Heart right ventricle (tissue), 16 donors: ENCODE measurements at regions of chr4 and their contacts with region 1.

Region 1: GRCh38 chr4:17232566-17233253 is 279.2 kb downstream of the QDPR start:
- DNase-seq: peak; percentile 21 to 85
- ATAC-seq: peak; percentile 93 to 98 (median 96)
- H3K4me3 ChIP-seq: no peak overlapping the region
- H3K27ac ChIP-seq: peak overlapping the region; percentile 32 to 86 (median 70)
- H3K4me1 ChIP-seq: peaks cover 0 to 26% (median 14%) of the 10 kb centered on the region in 9 donors
- H3K27me3 ChIP-seq: no peaks in the 10 kb centered on the region
- CTCF ChIP-seq: no peak

Region 2: GRCh38 chr4:16721613-16722291 is 511.0 kb before region 1 on chr4:
- intact Hi-C with region 1: no loop called
- DNase-seq: no peak
- ATAC-seq: peak in 6 of 8 donors; percentile 31 to 63 (median 51)
- H3K4me3 ChIP-seq: peak overlapping the region in 5 of 10 donors; percentile 2 to 13 (median 9)
- H3K27ac ChIP-seq: peak overlapping the region in 5 of 10 donors; percentile 1 to 36 (median 16)
- H3K4me1 ChIP-seq: peaks cover 0 to 19% (median 8%) of the 10 kb centered on the region in 9 donors
- H3K27me3 ChIP-seq: no peaks in the 10 kb centered on the region
- CTCF ChIP-seq: no peak

Region 3: GRCh38 chr4:17168571-17168970 is 64.1 kb before region 1 on chr4:
- intact Hi-C with region 1: loop called in 2 of 10 experiments (anchors 5 kb)
- DNase-seq: peak in 1 of 2 donors; percentile 65
- ATAC-seq: peak in 7 of 8 donors; percentile 56 to 87 (median 74)
- H3K4me3 ChIP-seq: no peak overlapping the region
- H3K27ac ChIP-seq: peak overlapping the region in 5 of 10 donors; percentile 16 to 70 (median 53)
- H3K4me1 ChIP-seq: peaks cover 4 to 42% (median 20%) of the 10 kb centered on the region in 9 donors
- H3K27me3 ChIP-seq: no peaks in the 10 kb centered on the region
- CTCF ChIP-seq: no peak

Region 4: DNA sequence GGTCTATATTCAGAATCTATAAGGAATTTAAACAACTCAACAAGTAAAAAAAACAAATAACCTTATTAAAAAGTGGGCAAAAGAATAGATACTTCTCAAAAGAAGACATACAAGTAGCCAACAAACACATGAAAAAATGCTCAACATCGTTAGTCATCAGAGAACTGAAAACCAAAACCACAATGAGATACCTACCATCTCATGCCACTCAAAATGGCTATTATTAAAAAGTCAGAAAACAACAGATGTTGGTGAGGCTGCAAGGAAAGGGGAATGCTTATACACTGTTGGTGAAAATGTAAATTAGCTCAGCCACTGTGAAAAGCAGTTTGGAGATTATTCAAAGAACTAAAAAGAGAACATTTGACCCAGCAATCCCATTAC is 77.6 kb after region 1 on chr4:
- intact Hi-C with region 1: loop called in 1 of 10 experiments (anchors 10 kb)
- DNase-seq: no peak
- ATAC-seq: no peak
- H3K4me3 ChIP-seq: no peak overlapping the region
- H3K27ac ChIP-seq: no peak overlapping the region
- H3K4me1 ChIP-seq: no peaks in the 10 kb centered on the region
- H3K27me3 ChIP-seq: no peaks in the 10 kb centered on the region
- CTCF ChIP-seq: no peak

Region 5: GRCh38 chr4:17356926-17357325 is 124.2 kb after region 1 on chr4:
- intact Hi-C with region 1: no loop called
- DNase-seq: no peak
- ATAC-seq: no peak
- H3K4me3 ChIP-seq: no peak overlapping the region
- H3K27ac ChIP-seq: no peak overlapping the region
- H3K4me1 ChIP-seq: no peaks in the 10 kb centered on the region
- H3K27me3 ChIP-seq: peaks cover 0 to 8% (median 0%) of the 10 kb centered on the region in 7 donors
- CTCF ChIP-seq: no peak